Activated T-helper 1 cell treated with anti-CD3 and anti-CD28 coated beads, Interleukin-12 subunit alpha, Interleukin-12 subunit beta, Interleukin-2, Interleukin-4 antibody, amounts not matched to agents 30 ng/mL and 10 ng/mL and 1 ng/mL, durations not matched to agents 14 hours and 24 hours and 36 hours (primary cell): ENCODE measurements at regions of chr11 and their contacts with region 1.

Region 1: GRCh38 chr11:67606492-67607201 is at the start of gene NDUFV1:
- DNase-seq: peak; percentile 97
- H3K4me3 Mint-ChIP-seq: peak within 1 kb of the TSS; percentile 94
- H3K27ac Mint-ChIP-seq: peak within 1 kb of the TSS; percentile 97
- H3K4me1 Mint-ChIP-seq: peaks cover 26% of the 10 kb centered on the region
- H3K27me3 Mint-ChIP-seq: peaks cover 7% of the 10 kb centered on the region
- total RNA-seq, gene NDUFV1: 289 and 303 TPM in 2 replicates

Region 2: GRCh38 chr11:67428052-67428914 is 178.4 kb before region 1 on chr11 and contains the start of gene RPS6KB2:
- intact Hi-C with region 1: loop called (anchors 1 kb)
- DNase-seq: peak; percentile 98
- H3K4me3 Mint-ChIP-seq: peak within 1 kb of the TSS; percentile 98
- H3K27ac Mint-ChIP-seq: peak within 1 kb of the TSS; percentile 97
- H3K4me1 Mint-ChIP-seq: peaks cover 27% of the 10 kb centered on the region
- H3K27me3 Mint-ChIP-seq: no peaks in the 10 kb centered on the region
- total RNA-seq, gene RPS6KB2: 84.1 and 86.2 TPM in 2 replicates

Region 3: GRCh38 chr11:67583247-67584204 is 23.1 kb before region 1 on chr11 and contains the start of gene GSTP1:
- intact Hi-C with region 1: loop called (anchors 1 kb)
- DNase-seq: peak; percentile 74
- H3K4me3 Mint-ChIP-seq: peak within 1 kb of the TSS; percentile 90
- H3K27ac Mint-ChIP-seq: peak within 1 kb of the TSS; percentile 87
- H3K4me1 Mint-ChIP-seq: peaks cover 47% of the 10 kb centered on the region
- H3K27me3 Mint-ChIP-seq: peaks cover 18% of the 10 kb centered on the region
- total RNA-seq, gene GSTP1: 278 and 289 TPM in 2 replicates